ENCODE measurements at regions of chr18 and their contacts with region 1.

Region 1: GRCh38 chr18:79523736-79524180 is 128.0 kb downstream of the NFATC1 start:
- DNase-seq: no peak
- H3K4me3 ChIP-seq: no peak overlapping the region
- H3K27ac ChIP-seq: peak overlapping the region in 1 of 2 donors; percentile 14
- H3K4me1 ChIP-seq: peaks cover 0 to 8% of the 10 kb centered on the region in 2 donors
- H3K27me3 ChIP-seq: no peaks in the 10 kb centered on the region
- CTCF ChIP-seq: no peak
- POLR2A ChIP-seq: no peak

Region 2: GRCh38 chr18:79108549-79109215 is 415.1 kb before region 1 on chr18:
- intact Hi-C with region 1: no loop called
- DNase-seq: no peak
- H3K4me3 ChIP-seq: no peak overlapping the region
- H3K27ac ChIP-seq: no peak overlapping the region
- H3K4me1 ChIP-seq: no peaks in the 10 kb centered on the region
- H3K27me3 ChIP-seq: no peaks in the 10 kb centered on the region
- CTCF ChIP-seq: no peak
- POLR2A ChIP-seq: no peak

Region 3: DNA sequence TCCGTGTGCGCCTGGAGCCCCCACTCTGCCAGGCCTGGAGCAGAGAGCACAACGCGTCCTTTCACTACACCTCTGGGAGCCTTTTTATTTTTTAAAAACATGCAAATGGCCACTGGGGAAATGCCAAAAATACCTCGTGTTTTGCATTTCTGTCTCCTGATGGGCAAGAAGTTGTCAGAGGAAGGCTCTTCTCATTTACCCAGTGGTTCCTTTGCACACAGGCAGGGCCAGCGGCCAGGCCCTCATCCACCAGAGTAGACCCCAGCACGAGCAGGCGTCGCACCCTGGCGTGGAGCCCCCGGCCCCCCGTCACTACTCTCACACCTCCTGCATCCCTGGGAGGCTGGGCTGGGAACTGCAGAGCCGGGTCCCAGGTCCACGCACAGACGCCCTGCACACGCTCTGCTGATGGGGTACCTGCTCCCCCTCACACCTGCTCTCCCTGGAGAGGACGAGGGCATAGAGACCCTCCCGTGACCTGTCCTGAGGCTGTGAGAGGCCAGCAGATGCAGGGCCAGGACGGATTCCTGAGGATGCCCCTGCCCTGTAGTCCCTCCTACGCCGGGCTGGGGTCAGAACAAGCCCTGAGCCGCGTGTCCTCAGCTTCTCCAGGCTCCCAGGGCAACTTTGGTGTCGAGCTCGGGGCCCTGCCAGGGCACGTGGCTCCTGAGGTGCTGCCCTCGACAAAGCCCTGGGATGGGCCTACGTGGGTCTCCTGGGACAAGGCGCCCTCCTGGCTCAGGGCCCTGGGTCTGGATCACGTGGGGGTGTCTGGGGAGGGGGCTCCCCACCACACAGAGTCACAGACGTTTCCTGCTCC is 63.1 kb before region 1 on chr18:
- intact Hi-C with region 1: loop called (anchors 5 kb)
- DNase-seq: no peak
- H3K4me3 ChIP-seq: no peak overlapping the region
- H3K27ac ChIP-seq: no peak overlapping the region
- H3K4me1 ChIP-seq: peaks cover 0 to 4% of the 10 kb centered on the region in 2 donors
- H3K27me3 ChIP-seq: no peaks in the 10 kb centered on the region
- CTCF ChIP-seq: no peak
- POLR2A ChIP-seq: no peak

Region 4: GRCh38 chr18:79476918-79477571 is 46.7 kb before region 1 on chr18:
- intact Hi-C with region 1: no loop called
- DNase-seq: peak in 1 of 2 donors; percentile 44
- H3K4me3 ChIP-seq: no peak overlapping the region
- H3K27ac ChIP-seq: peak overlapping the region; percentile 34 to 55
- H3K4me1 ChIP-seq: no peaks in the 10 kb centered on the region
- H3K27me3 ChIP-seq: no peaks in the 10 kb centered on the region
- CTCF ChIP-seq: no peak
- POLR2A ChIP-seq: no peak

Region 5: GRCh38 chr18:79567481-79568147 is 43.9 kb after region 1 on chr18:
- intact Hi-C with region 1: no loop called
- DNase-seq: peak in 1 of 2 donors; percentile 66
- H3K4me3 ChIP-seq: peak overlapping the region in 2 of 3 donors; percentile 7 to 35
- H3K27ac ChIP-seq: peak overlapping the region; percentile 89 to 90
- H3K4me1 ChIP-seq: peaks cover 0 to 4% of the 10 kb centered on the region in 2 donors
- H3K27me3 ChIP-seq: no peaks in the 10 kb centered on the region
- CTCF ChIP-seq: no peak
- POLR2A ChIP-seq: no peak